Aorta (tissue), 5 donors: ENCODE measurements at regions of chr6 and their contacts with region 1.

Region 1: GRCh38 chr6:111997078-111997852 is 56.6 kb upstream of the CCN6 start:
- DNase-seq: peak; percentile 88 to 91
- ATAC-seq: peak; percentile 94
- H3K4me3 ChIP-seq: no peak overlapping the region
- H3K27ac ChIP-seq: no peak overlapping the region
- H3K4me1 ChIP-seq: no peaks in the 10 kb centered on the region
- H3K27me3 ChIP-seq: no peaks in the 10 kb centered on the region

Region 2: DNA sequence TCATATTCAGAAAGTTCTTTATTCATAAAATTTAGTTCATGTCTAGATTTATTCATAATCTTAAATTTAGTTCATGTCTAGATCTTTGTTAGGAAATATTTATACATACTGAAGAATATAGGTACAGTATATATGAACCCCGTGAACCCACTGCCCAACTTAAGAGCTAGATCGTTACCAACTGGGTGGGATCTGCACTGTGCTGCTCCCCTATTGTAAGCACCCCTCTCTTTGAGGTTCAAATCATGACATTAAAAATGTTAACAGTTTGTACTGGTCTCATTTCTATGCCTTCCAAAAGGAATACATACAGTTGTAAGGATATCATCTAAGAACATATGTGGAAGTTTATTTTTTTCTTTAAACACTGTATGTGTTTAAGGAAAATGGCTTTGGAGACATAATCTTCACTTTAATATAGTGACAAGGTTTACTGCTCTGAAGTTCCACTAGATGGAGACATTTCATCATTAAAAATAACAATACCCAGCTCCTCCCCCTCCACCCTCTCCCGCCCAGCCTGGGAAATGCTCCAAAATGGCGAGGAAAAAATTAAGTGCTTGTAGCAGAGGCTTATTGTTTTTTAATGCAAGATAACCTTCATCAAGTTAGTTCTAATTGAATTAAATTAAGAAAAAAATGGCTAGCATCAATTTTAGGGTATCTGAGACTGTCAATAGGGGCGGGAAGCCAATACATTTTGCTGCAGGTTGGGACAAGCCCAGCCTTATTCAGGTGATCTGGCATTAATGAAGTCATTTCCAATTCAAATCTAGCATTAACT is 287.5 kb before region 1 on chr6:
- intact Hi-C with region 1: loop called (anchors 1 to 5 kb)
- DNase-seq: peak; percentile 72 to 78
- ATAC-seq: peak; percentile 91
- H3K4me3 ChIP-seq: no peak overlapping the region
- H3K27ac ChIP-seq: no peak overlapping the region
- H3K4me1 ChIP-seq: no peaks in the 10 kb centered on the region
- H3K27me3 ChIP-seq: no peaks in the 10 kb centered on the region